H1 (cell line): ENCODE measurements at regions of chr6 and their contacts with region 1.

Region 1: DNA sequence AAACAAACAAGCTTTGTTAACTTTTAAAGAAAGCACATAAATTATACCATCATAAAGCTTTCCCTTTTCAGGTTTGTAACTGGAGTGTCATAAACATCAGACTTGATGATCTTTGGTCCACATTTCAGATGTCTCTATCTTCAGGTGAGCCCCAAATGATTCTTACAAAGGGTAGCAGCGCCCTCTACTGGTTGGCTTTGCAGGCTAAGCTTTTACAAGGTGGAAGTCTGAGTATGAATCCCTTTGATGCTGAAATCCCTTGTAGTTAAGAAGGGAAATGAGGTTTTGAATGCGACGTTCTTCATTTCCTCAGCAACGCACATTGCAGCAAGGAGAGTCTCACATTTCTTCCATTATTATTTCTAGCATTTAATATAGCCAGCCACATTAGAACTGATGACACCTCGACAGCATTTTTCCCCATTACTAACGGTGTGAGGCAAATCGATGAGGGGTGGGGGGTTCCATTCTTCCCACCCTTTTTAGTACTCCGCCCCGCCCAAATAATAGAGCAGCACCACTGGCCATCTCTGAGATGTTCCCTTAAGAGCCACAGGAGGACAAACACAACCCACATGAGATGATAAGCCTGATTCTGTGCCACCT is 126.3 kb upstream of the NT5E start:
- DNase-seq: peak; percentile 38 to 93
- H3K4me3 ChIP-seq: no peak overlapping the region
- H3K27ac ChIP-seq: no peak overlapping the region
- H3K4me1 ChIP-seq: no peaks in the 10 kb centered on the region
- H3K27me3 ChIP-seq: no peaks in the 10 kb centered on the region
- CTCF ChIP-seq: peak in 2 of 3 experiments; percentile 80 to 86; a peak in 3 of 4 replicates
- EP300 ChIP-seq: no peak
- POLR2A ChIP-seq: no peak
- RAD21 ChIP-seq: peak; percentile 93 to 96

Region 2: GRCh38 chr6:84774157-84774984 is 549.2 kb before region 1 on chr6:
- CTCF ChIA-PET with region 1: interaction called, 22 read pairs
- POLR2A ChIA-PET with region 1: no interaction called
- DNase-seq: peak in 1 of 2 experiments; percentile 92
- H3K4me3 ChIP-seq: peak overlapping the region; percentile 32 to 75 (median 47)
- H3K27ac ChIP-seq: no peak overlapping the region
- H3K4me1 ChIP-seq: peaks cover 0 to 8% (median 2%) of the 10 kb centered on the region in 4 experiments; a peak in 2 of 7 replicates
- H3K27me3 ChIP-seq: peaks cover 47 to 79% (median 63%) of the 10 kb centered on the region in 4 experiments
- CTCF ChIP-seq: peak; percentile 85 to 94 (median 88)
- EP300 ChIP-seq: no peak
- POLR2A ChIP-seq: no peak
- RAD21 ChIP-seq: peak; percentile 47 to 66

Region 3: GRCh38 chr6:84779380-84779779 is 544.2 kb before region 1 on chr6:
- CTCF ChIA-PET with region 1: interaction called, 22 read pairs
- POLR2A ChIA-PET with region 1: no interaction called
- DNase-seq: no peak
- H3K4me3 ChIP-seq: no peak overlapping the region
- H3K27ac ChIP-seq: no peak overlapping the region
- H3K4me1 ChIP-seq: peaks cover 0 to 2% (median 0%) of the 10 kb centered on the region in 4 experiments; a peak in 2 of 7 replicates
- H3K27me3 ChIP-seq: peaks cover 10 to 29% (median 20%) of the 10 kb centered on the region in 4 experiments
- CTCF ChIP-seq: peak in 2 of 3 experiments; percentile 15 to 42; a peak in 3 of 4 replicates
- EP300 ChIP-seq: no peak
- POLR2A ChIP-seq: no peak
- RAD21 ChIP-seq: peak; percentile 29 to 48

Region 4: DNA sequence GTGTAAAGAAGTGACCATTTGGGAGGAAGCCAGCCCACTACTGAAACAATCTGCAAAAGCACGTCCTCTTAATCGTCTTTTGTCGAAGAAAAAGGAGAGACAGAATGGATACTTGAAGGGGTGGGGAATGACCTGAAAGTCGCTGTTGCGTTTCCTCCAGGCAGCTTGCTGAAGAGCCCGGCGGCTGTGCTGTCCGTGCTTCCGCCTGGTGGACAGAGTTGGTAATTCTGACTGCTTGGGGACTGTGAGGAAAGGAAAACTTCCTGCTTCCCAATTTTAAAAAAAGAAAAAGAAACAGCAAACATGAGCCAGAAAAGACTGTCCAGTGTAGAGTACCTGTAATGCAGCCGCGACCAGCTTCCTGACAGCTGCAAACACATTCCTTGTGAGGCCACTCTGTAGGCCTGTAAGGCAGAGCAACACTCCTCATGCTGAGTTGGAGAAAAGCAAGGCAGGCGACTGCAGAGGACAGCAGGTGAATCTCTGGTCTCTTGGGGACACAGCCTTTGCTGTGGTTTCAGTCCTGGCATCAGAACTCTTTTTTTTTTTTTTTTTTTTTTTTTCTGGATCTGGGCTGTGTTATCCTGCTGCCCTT is 308.0 kb before region 1 on chr6:
- CTCF ChIA-PET with region 1: interaction called, 10 read pairs
- POLR2A ChIA-PET with region 1: no interaction called
- DNase-seq: peak; percentile 57 to 80
- H3K4me3 ChIP-seq: no peak overlapping the region
- H3K27ac ChIP-seq: no peak overlapping the region
- H3K4me1 ChIP-seq: no peaks in the 10 kb centered on the region; a peak in 1 of 7 replicates
- H3K27me3 ChIP-seq: no peaks in the 10 kb centered on the region
- CTCF ChIP-seq: peak; percentile 80 to 95 (median 81)
- EP300 ChIP-seq: no peak
- POLR2A ChIP-seq: no peak
- RAD21 ChIP-seq: peak; percentile 77 to 79

Region 5: DNA sequence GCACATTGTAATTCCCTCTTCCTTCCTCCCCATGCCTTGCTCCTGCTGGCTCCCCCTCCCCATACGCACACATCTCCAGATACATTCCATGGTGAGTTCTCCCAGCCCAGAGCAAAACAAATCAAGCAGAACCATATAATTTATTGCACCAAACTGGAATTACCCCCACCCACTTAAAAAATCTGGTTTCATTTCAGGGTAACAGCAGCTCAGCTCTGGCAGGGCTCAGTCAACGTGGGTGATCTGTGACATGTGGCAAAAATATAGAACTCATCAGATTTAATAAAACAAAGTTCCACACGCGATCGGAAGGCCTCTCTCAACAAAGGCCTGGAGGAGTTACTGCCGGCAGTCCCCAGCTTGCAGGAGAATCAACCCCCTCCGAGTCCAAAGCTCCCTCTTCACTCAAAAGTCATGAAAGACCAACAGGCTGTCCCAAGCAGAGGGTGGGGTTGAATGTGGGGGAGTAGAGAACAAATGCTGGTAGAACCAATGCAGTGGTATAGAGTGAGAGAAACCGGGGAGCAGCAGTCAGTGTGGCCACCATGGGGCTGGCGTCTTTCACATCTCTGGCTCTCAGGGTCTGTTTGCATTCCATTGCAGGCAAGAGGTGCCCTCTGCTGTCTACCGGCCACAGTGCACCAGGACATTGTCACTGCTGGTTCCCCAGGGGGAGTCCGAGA is 196.9 kb before region 1 on chr6:
- CTCF ChIA-PET with region 1: interaction called, 43 read pairs
- POLR2A ChIA-PET with region 1: no interaction called
- DNase-seq: peak; percentile 31 to 82
- H3K4me3 ChIP-seq: peak overlapping the region in 2 of 4 experiments; percentile 26 to 51; a peak in 5 of 8 replicates
- H3K27ac ChIP-seq: no peak overlapping the region
- H3K4me1 ChIP-seq: peaks cover 0 to 4% (median 2%) of the 10 kb centered on the region in 4 experiments; a peak in 3 of 7 replicates
- H3K27me3 ChIP-seq: peaks cover 0 to 1% (median 0%) of the 10 kb centered on the region in 4 experiments; a peak in 1 of 7 replicates
- CTCF ChIP-seq: peak; percentile 89 to 93 (median 93)
- EP300 ChIP-seq: no peak
- POLR2A ChIP-seq: peak in 1 of 2 experiments; percentile 62; a peak in 1 of 3 replicates
- RAD21 ChIP-seq: peak; percentile 90 to 93

Region 6: DNA sequence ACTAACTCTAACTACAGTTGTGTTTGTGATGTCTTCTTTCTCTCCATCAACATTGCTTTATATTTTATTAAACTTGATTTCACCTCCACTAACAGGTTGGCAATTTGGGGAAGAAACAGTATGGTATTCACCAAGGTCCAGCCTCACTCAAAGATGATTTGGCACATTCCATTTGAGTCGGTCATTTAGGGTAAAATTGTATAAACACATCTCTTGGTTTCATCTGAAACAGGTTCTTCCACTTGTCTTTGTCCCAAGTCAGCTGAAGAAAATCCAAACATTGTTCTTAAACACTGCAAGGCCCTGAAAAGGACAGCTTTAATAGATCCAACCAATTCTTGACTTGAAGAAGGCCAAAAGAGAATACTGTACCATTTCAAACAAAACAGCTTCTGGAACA is 21.5 kb after region 1 on chr6:
- CTCF ChIA-PET with region 1: interaction called, 10 read pairs
- POLR2A ChIA-PET with region 1: no interaction called
- DNase-seq: no peak
- H3K4me3 ChIP-seq: no peak overlapping the region
- H3K27ac ChIP-seq: no peak overlapping the region
- H3K4me1 ChIP-seq: no peaks in the 10 kb centered on the region
- H3K27me3 ChIP-seq: peaks cover 0 to 1% (median 0%) of the 10 kb centered on the region in 4 experiments; a peak in 1 of 7 replicates
- CTCF ChIP-seq: no peak
- EP300 ChIP-seq: no peak
- POLR2A ChIP-seq: no peak
- RAD21 ChIP-seq: no peak

Region 7: DNA sequence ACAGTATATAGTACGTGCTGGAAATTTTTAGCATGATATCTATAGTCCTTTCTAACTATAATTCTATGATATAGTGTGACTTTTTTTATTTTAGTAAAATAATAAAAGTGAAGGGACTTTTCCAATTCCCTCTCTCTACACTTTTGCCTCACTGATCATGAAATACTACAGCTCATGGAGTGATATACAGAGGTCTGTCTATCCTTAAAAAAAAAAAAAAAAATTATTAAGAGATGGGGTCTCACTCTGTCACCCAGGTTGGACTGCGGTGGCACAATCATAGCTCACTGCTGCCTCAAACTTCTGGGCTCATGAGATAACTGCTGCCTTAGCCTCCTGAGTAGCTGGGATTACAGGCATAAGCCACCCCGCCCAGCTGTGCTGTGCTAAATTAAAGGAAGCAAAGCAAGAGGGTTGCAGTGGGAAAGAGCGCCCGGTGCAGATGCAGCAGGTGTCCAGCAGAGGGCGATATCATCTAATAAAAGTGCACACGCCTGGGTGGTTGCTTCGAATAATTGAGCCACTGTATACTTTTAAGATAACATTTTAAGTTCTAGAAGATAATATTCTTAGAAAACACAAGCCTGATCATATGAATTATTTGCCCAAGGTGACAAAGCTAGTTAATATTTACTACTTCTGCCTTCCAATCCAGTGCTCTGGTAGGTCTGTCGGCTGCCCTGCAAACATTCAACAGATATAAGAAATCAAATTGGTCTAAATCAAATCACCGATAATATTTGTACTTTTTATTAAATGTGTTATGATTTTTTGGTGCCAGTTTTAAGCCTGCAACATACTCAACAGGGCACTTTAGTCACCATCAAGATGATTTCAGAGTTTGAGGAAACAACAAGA is 31.5 kb after region 1 on chr6:
- CTCF ChIA-PET with region 1: interaction called, 11 read pairs
- POLR2A ChIA-PET with region 1: no interaction called
- DNase-seq: peak; percentile 44 to 82
- H3K4me3 ChIP-seq: no peak overlapping the region
- H3K27ac ChIP-seq: no peak overlapping the region
- H3K4me1 ChIP-seq: no peaks in the 10 kb centered on the region
- H3K27me3 ChIP-seq: no peaks in the 10 kb centered on the region
- CTCF ChIP-seq: peak; percentile 86 to 92 (median 87)
- EP300 ChIP-seq: no peak
- POLR2A ChIP-seq: no peak
- RAD21 ChIP-seq: peak; percentile 91 to 93